ENCODE measurements at regions of chr10 and their contacts with region 1.

Region 1: GRCh38 chr10:72328045-72328828 is 26.5 kb downstream of the DNAJB12 start:
- DNase-seq: peak; percentile 81 to 91
- H3K4me3 ChIP-seq: no peak overlapping the region
- H3K4me3 Mint-ChIP-seq: no peak overlapping the region
- H3K27ac Mint-ChIP-seq: peak overlapping the region; percentile 63
- H3K4me1 ChIP-seq: 0 out of 2 replicates have a peak, but pooled peaks cover 8% of the 10 kb centered on the region
- H3K4me1 Mint-ChIP-seq: peaks cover 17% of the 10 kb centered on the region
- H3K27me3 ChIP-seq: no peaks in the 10 kb centered on the region
- H3K27me3 Mint-ChIP-seq: no peaks in the 10 kb centered on the region
- CTCF ChIP-seq: peak; percentile 78 to 95

Region 2: GRCh38 chr10:71899665-71900412 is 428.4 kb before region 1 on chr10:
- CTCF ChIA-PET with region 1: no interaction called
- POLR2A ChIA-PET with region 1: no interaction called
- intact Hi-C with region 1: loop called (anchors 5 kb)
- DNase-seq: no peak
- H3K4me3 ChIP-seq: no peak overlapping the region
- H3K4me3 Mint-ChIP-seq: no peak overlapping the region
- H3K27ac Mint-ChIP-seq: no peak overlapping the region
- H3K4me1 ChIP-seq: no peaks in the 10 kb centered on the region; the same call in 1 of the 2 replicates
- H3K4me1 Mint-ChIP-seq: peaks cover 6% of the 10 kb centered on the region
- H3K27me3 ChIP-seq: no peaks in the 10 kb centered on the region
- H3K27me3 Mint-ChIP-seq: no peaks in the 10 kb centered on the region
- CTCF ChIP-seq: no peak

Region 3: DNA sequence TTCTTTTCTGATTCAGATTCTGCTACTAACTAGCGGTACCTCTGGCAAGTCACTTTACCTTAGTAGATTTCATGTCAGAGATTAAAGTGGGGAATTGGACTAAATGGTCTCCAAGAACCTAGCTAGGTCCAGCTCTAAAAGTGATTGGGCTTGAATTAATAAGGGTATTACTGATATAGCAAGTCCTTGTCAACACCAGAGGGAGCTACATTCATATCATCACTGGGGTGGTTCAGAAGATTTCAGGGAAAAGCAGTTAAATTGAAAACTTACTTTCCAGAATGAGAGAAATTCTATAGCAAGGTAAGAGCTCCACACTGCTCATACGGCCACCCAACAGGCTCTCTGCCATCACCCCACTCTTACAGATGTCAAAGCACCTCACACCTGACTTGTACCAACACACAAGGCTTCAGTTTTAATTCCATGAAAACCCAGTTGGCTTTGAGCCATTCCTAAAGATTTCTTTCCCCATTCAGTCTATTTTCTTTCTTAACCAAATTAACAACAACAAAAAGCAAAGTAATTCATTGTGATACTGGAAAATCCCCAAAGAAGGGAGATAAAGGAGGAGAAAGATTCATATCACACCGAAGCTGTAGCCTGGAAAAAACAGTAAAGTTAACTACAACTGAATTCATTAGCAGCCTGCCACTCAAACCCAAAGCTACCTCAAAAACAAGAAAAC is 201.9 kb before region 1 on chr10:
- CTCF ChIA-PET with region 1: interaction called, 23 read pairs
- POLR2A ChIA-PET with region 1: no interaction called
- intact Hi-C with region 1: loop called (anchors 1 kb)
- DNase-seq: peak in 1 of 2 experiments; percentile 49
- H3K4me3 ChIP-seq: no peak overlapping the region
- H3K4me3 Mint-ChIP-seq: no peak overlapping the region
- H3K27ac Mint-ChIP-seq: no peak overlapping the region
- H3K4me1 ChIP-seq: peaks cover 7% of the 10 kb centered on the region; the same call in 1 of the 2 replicates
- H3K4me1 Mint-ChIP-seq: peaks cover 13% of the 10 kb centered on the region
- H3K27me3 ChIP-seq: no peaks in the 10 kb centered on the region
- H3K27me3 Mint-ChIP-seq: no peaks in the 10 kb centered on the region
- CTCF ChIP-seq: peak; percentile 60 to 69

Region 4: DNA sequence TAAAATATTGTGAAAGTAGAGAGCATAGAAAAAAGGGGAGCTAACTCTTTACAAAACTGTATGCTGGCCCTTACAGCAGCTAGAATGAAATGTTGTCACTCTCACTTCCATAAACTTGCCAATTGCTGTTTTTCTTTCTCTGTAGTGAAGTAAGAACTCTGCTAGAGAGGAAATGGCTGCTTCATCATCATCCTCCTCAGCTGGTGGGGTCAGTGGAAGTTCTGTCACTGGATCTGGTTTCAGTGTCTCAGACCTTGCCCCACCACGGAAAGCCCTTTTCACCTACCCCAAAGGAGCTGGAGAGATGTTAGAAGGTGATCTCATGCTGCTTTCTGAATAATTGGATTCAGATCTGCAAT is 104.5 kb before region 1 on chr10:
- CTCF ChIA-PET with region 1: interaction called, 3 read pairs
- POLR2A ChIA-PET with region 1: interaction called, 3 read pairs
- intact Hi-C with region 1: loop called (anchors 2 kb)
- DNase-seq: no peak
- H3K4me3 ChIP-seq: no peak overlapping the region
- H3K4me3 Mint-ChIP-seq: no peak overlapping the region
- H3K27ac Mint-ChIP-seq: no peak overlapping the region
- H3K4me1 ChIP-seq: no peaks in the 10 kb centered on the region
- H3K4me1 Mint-ChIP-seq: no peaks in the 10 kb centered on the region
- H3K27me3 ChIP-seq: no peaks in the 10 kb centered on the region
- H3K27me3 Mint-ChIP-seq: no peaks in the 10 kb centered on the region
- CTCF ChIP-seq: no peak

Region 5: GRCh38 chr10:72248468-72249151 is 79.6 kb before region 1 on chr10:
- CTCF ChIA-PET with region 1: no interaction called
- POLR2A ChIA-PET with region 1: no interaction called
- intact Hi-C with region 1: loop called (anchors 2 kb)
- DNase-seq: no peak
- H3K4me3 ChIP-seq: no peak overlapping the region
- H3K4me3 Mint-ChIP-seq: no peak overlapping the region
- H3K27ac Mint-ChIP-seq: no peak overlapping the region
- H3K4me1 ChIP-seq: peaks cover 26% of the 10 kb centered on the region
- H3K4me1 Mint-ChIP-seq: peaks cover 14% of the 10 kb centered on the region
- H3K27me3 ChIP-seq: no peaks in the 10 kb centered on the region
- H3K27me3 Mint-ChIP-seq: no peaks in the 10 kb centered on the region
- CTCF ChIP-seq: no peak

Measured in Caco-2 (cell line).